Stomach (tissue), 19 donors: ENCODE measurements at regions of chr7 and their contacts with region 1.

Region 1: GRCh38 chr7:23055582-23056178 is 41.8 kb upstream of the HYCC1 start:
- DNase-seq: peak; percentile 31 to 83
- H3K4me3 ChIP-seq: no peak overlapping the region
- H3K27ac ChIP-seq: no peak overlapping the region
- H3K4me1 ChIP-seq: no peaks in the 10 kb centered on the region
- H3K27me3 ChIP-seq: no peaks in the 10 kb centered on the region
- CTCF ChIP-seq: peak in 5 of 7 experiments; percentile 71 to 80 (median 77)
- EP300 ChIP-seq: no peak
- POLR2A ChIP-seq: no peak

Region 2: DNA sequence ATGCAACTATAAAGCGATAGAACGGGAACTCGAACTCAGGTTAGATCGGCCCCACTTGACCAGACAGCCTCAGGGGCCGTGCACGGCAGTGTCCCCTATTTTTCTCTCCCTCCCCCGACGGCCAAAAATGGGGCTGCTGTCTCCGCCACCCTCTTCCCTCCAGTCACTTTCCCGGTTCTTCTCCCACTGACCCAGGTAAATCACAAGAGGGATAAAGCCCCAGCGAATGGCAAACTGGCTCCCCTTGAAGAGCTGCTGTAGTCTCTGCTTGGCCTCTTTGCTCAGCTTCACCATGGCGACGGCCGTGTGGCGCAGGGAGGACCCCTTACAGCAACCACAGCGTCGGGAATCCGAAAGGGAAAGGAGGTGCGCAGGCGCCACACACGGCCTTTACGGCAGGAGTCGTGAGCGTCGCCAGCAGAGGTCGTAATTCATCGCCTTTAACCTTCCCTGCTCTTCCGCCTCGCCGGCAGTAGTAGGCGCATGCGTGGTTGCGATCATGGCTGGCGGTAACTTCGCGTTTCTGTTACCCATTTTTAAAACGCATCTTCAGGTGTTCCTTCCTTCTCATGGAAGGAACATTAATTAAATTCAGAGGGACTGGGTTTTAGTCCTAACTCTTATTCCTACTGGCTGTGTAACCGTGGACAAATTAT is 233.1 kb before region 1 on chr7 and contains the start of gene TOMM7:
- intact Hi-C with region 1: loop called (anchors 10 kb)
- DNase-seq: peak; percentile 91 to 99
- H3K4me3 ChIP-seq: peak within 1 kb of the TSS; percentile 62 to 89 (median 73)
- H3K27ac ChIP-seq: peak within 1 kb of the TSS; percentile 78 to 89 (median 83)
- H3K4me1 ChIP-seq: peaks cover 14 to 48% (median 35%) of the 10 kb centered on the region in 4 donors
- H3K27me3 ChIP-seq: peaks cover 0 to 12% (median 0%) of the 10 kb centered on the region in 3 donors
- CTCF ChIP-seq: peak in 5 of 7 experiments; percentile 22 to 72 (median 53)
- EP300 ChIP-seq: no peak
- POLR2A ChIP-seq: peak in 1 of 4 donors; percentile 50
- total RNA-seq, gene TOMM7: 29.8 to 249 (median 153) TPM

Region 3: DNA sequence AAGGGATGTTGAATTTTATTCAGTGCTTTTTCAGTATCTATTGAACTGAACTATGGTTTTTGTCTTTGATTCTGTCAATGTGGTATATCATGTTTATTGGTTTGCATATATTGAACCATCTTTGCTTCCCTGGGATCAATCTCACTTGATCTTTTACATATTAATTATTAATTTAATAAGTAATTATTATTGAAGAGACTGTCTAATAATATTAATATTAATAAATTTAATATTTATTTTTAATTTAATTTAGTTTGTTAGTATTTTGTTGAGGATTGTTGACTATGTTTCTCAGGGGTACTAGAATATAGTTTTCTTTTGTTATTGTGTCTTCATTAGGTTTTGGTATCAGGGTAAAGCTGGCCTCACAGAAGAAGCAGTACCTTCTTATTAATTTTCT is 502.6 kb after region 1 on chr7:
- intact Hi-C with region 1: no loop called
- DNase-seq: no peak
- H3K4me3 ChIP-seq: no peak overlapping the region
- H3K27ac ChIP-seq: no peak overlapping the region
- H3K4me1 ChIP-seq: no peaks in the 10 kb centered on the region
- H3K27me3 ChIP-seq: no peaks in the 10 kb centered on the region
- CTCF ChIP-seq: no peak
- EP300 ChIP-seq: no peak
- POLR2A ChIP-seq: no peak